MCF 10A (cell line): ENCODE measurements at regions of chr12 and their contacts with region 1.

Region 1: GRCh38 chr12:46556105-46556559 is 183.6 kb upstream of the SLC38A2 start:
- DNase-seq: peak; percentile 85
- H3K4me3 Mint-ChIP-seq: peak overlapping the region; percentile 17
- H3K27ac Mint-ChIP-seq: peak overlapping the region; percentile 68
- H3K4me1 Mint-ChIP-seq: peaks cover 73% of the 10 kb centered on the region
- H3K27me3 Mint-ChIP-seq: no peaks in the 10 kb centered on the region
- CTCF ChIP-seq: no peak

Region 2: DNA sequence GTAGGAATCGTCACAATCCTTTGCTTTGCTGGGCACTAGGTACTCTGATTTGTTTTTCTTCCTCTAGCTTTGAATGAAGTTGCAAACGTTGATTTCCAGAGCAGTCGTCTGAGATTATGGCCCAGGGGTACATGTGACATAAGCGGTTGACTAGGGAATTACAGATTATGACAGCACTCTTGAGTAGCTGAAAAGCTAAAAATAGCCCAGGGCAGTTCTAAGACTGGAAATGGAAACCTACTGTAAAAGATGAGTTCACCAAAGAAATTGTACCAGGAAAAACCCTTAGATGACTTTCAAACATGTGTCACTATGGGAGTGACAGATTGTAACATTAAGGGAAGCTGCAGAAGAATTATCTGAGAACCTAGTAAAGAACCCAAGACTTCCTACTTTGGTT is 1231.7 kb before region 1 on chr12:
- CTCF ChIA-PET with region 1: no interaction called
- POLR2A ChIA-PET with region 1: no interaction called
- intact Hi-C with region 1: no loop called
- DNase-seq: peak; percentile 7
- H3K4me3 Mint-ChIP-seq: no peak overlapping the region
- H3K27ac Mint-ChIP-seq: no peak overlapping the region
- H3K4me1 Mint-ChIP-seq: no peaks in the 10 kb centered on the region
- H3K27me3 Mint-ChIP-seq: no peaks in the 10 kb centered on the region
- CTCF ChIP-seq: no peak

Region 3: DNA sequence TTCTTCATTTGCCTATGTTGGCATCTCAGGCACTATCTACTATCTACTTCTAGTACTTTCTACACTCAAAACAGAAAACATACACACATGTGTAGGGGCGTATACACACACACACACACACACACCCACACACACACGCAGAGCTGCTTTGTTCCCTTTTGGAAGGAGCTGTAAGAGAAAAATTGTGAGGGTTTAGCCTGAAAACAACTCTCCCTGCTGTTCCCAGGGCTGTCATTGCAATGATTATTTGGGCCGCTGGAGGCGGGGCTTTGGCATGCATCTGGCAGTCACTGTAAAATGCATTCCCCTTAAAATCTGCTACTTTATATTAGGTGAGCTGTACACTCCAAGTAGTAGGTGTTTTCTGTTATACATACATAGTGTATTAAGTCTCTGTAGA is 154.5 kb before region 1 on chr12:
- CTCF ChIA-PET with region 1: no interaction called
- POLR2A ChIA-PET with region 1: interaction called, 11 read pairs
- intact Hi-C with region 1: no loop called
- DNase-seq: peak; percentile 49
- H3K4me3 Mint-ChIP-seq: no peak overlapping the region
- H3K27ac Mint-ChIP-seq: peak overlapping the region; percentile 86
- H3K4me1 Mint-ChIP-seq: peaks cover 48% of the 10 kb centered on the region
- H3K27me3 Mint-ChIP-seq: no peaks in the 10 kb centered on the region
- CTCF ChIP-seq: peak; percentile 19

Region 4: DNA sequence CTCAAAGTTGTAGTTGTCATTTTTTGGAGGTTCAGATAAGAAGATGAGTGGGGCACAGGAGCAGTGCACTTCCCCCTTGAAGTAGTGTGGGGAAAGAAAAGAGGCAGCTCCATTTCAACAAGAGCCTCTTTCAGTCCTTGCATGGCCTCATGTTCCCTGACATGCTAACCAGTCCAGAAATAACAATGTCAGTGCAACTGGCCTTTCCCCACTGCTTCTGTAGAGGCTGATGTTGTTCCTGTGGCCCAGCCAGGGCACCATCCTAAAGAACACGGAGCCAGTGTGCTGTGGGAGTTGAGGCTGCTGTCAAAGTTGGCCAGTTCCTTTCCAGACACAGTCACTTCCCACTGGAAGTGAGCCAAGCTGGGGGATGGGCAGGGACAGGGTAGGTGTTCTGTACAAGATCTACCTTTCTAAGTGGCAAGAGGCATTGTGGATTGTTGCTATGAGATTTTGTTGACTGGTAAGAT is 105.8 kb before region 1 on chr12:
- CTCF ChIA-PET with region 1: no interaction called
- POLR2A ChIA-PET with region 1: interaction called, 20 read pairs
- intact Hi-C with region 1: no loop called
- DNase-seq: peak; percentile 73
- H3K4me3 Mint-ChIP-seq: no peak overlapping the region
- H3K27ac Mint-ChIP-seq: peak overlapping the region; percentile 90
- H3K4me1 Mint-ChIP-seq: peaks cover 64% of the 10 kb centered on the region
- H3K27me3 Mint-ChIP-seq: no peaks in the 10 kb centered on the region
- CTCF ChIP-seq: no peak

Region 5: DNA sequence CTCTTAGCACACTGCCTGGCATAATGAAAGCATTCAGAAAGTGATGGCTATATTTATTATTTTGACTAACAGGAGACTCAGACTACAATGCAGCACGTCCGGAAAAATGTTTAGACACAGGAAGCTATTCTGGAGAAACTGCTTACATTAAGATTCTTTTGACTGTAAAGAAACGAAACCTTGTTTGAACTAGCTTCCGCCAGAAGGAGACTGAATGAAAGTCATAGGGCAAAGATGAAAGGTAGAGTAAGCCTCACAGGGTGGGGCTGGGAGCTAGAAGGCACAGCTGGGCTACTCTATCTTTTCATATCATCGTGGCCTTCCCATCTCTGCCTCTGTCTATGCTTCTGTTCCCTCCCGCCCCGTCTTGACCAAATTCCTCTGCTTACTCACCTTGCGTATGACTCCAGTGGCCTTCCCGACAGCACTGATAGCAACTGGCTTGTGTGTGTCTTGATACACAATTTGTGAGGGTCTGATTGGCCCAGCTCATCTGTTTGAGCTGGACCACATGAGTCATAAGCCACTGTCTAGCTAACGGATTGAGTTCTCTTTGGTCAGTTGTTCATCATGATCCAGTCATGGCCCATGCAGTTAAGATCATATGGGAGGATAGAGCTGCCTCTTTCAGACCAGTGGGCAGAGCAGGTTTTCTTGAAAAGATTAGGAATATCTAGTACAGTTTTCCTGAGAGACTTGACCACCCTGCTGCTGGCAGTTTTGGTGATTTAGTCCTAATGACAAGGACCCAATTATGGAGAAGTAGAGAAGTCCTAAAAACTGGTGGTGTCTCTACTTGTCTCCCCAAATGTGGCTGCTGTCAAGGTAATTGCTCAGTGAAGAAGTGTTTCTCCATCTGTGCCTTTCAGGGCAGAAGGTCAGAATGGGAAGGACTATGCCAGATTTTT is 32.0 kb before region 1 on chr12:
- CTCF ChIA-PET with region 1: no interaction called
- POLR2A ChIA-PET with region 1: interaction called, 6 read pairs
- intact Hi-C with region 1: loop called (anchors 5 kb)
- DNase-seq: peak; percentile 73
- H3K4me3 Mint-ChIP-seq: peak overlapping the region; percentile 14
- H3K27ac Mint-ChIP-seq: peak overlapping the region; percentile 22
- H3K4me1 Mint-ChIP-seq: peaks cover 31% of the 10 kb centered on the region
- H3K27me3 Mint-ChIP-seq: no peaks in the 10 kb centered on the region
- CTCF ChIP-seq: no peak

Region 6: GRCh38 chr12:46534327-46534840 is 21.7 kb before region 1 on chr12:
- CTCF ChIA-PET with region 1: no interaction called
- POLR2A ChIA-PET with region 1: no interaction called
- intact Hi-C with region 1: no loop called
- DNase-seq: no peak
- H3K4me3 Mint-ChIP-seq: no peak overlapping the region
- H3K27ac Mint-ChIP-seq: no peak overlapping the region
- H3K4me1 Mint-ChIP-seq: no peaks in the 10 kb centered on the region
- H3K27me3 Mint-ChIP-seq: no peaks in the 10 kb centered on the region
- CTCF ChIP-seq: no peak

Region 7: DNA sequence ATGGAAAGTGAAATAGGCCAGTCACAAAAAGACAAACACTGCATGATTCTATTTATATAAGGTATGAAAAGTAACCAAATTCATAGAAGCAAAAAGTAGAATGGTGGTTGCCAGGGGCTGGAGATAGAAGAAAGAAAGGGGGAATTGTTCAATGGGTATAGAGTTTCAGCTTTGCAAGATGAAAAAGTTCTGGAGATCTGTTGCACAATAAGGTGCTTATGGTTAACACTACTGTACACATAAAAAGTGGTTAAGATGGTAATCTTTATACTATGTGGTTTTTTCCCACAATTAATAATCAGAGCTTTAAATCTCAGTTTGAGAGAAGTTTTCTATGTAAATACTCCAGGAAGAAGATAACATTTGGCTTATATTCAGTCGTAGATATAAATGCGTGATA is 196.3 kb after region 1 on chr12:
- CTCF ChIA-PET with region 1: no interaction called
- POLR2A ChIA-PET with region 1: no interaction called
- intact Hi-C with region 1: no loop called
- DNase-seq: no peak
- H3K4me3 Mint-ChIP-seq: no peak overlapping the region
- H3K27ac Mint-ChIP-seq: no peak overlapping the region
- H3K4me1 Mint-ChIP-seq: no peaks in the 10 kb centered on the region
- H3K27me3 Mint-ChIP-seq: no peaks in the 10 kb centered on the region
- CTCF ChIP-seq: no peak